Activated CD8-positive, alpha-beta memory T cell treated with anti-CD3 and anti-CD28 coated beads, Interleukin-2, amount 10 ng/mL, durations not matched to agents 7 days and 5 days (primary cell): ENCODE measurements at regions of chr5 and their contacts with region 1.

Region 1: DNA sequence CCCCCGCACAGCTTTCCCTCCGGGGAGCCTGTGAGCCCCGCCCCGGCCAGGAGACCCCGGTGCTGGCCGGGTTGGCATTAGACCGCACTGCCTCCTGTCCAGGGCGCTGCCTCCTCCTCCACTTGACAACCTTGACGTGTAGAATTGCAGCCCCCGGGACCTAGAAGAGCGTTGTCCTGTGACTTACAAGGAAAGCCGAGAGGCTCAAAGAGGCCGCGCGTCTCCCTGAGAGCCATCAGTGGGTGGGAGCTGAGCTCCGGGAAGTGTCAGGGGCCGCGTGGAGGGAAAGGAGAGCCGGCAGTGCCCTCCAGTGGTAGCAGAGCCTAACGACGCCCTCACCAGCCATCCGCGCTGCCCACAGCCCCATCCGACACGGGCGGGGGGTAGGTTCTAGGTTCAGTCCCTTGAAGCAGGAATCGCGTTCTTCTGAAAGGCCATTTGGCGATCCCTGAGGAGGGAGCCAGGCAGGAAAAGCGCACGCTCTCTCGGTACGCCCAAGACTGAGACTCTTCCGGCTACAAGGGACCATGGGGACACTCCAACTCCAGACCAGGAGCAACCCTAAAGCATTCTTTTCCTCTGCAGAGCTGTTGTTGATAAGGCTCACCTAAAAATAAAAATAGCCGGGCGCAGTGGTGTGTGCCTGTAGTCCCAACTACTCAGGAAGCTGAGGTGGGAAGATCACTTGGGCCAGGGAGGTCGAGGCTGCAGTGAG is 40.6 kb upstream of the SAP30L start:
- DNase-seq: peak; percentile 80
- ATAC-seq: peak; percentile 98
- H3K4me3 Mint-ChIP-seq: no peak overlapping the region
- H3K27ac Mint-ChIP-seq: no peak overlapping the region
- H3K4me1 Mint-ChIP-seq: peaks cover 7% of the 10 kb centered on the region
- H3K27me3 Mint-ChIP-seq: no peaks in the 10 kb centered on the region

Region 2: DNA sequence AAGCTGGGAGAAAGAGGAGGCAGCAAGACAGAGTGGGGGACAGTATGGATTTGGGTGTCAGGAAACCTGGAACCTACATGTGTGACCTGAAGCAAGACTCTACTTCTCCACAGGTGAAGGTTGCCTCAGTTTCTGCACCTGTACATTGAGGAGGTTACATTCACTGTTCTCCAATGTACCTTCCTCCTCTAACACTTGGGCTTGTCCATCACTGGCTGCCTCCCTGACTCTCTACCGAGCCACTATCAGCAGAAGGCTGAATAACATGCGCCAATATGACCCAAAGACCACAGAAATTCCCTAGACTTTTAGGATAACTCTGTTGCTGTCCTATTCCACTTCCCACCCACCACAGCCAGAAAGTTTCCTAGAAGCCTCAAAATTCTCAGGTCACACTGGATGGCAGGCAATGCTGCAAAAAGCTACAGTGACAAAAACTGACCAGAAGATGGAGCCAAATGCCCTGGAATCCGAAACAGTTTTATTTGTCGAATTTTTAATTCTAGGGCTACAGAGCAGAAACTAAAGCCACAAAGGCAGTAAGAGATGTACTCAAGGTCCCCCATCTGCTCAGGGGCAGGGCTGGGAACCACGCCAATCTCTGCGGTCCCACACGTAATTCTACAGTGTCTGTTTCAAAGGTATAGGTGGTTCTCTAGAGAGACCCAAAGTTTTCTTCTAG is 431.0 kb before region 1 on chr5:
- CTCF ChIA-PET with region 1: interaction called, 15 read pairs
- DNase-seq: peak; percentile 54
- ATAC-seq: peak; percentile 64
- H3K4me3 Mint-ChIP-seq: no peak overlapping the region
- H3K27ac Mint-ChIP-seq: no peak overlapping the region
- H3K4me1 Mint-ChIP-seq: no peaks in the 10 kb centered on the region
- H3K27me3 Mint-ChIP-seq: peaks cover 14% of the 10 kb centered on the region

Region 3: GRCh38 chr5:154038707-154039457 is 366.4 kb before region 1 on chr5 and contains the starts of genes FAM114A2 and MFAP3:
- CTCF ChIA-PET with region 1: interaction called, 10 read pairs
- DNase-seq: peak; percentile 95
- ATAC-seq: peak; percentile 99
- H3K4me3 Mint-ChIP-seq: peak within 1 kb of the TSS; percentile 93
- H3K27ac Mint-ChIP-seq: peak within 1 kb of the TSS; percentile 93
- H3K4me1 Mint-ChIP-seq: peaks cover 47% of the 10 kb centered on the region
- H3K27me3 Mint-ChIP-seq: no peaks in the 10 kb centered on the region
- total RNA-seq, gene FAM114A2: 22.3 to 27.0 TPM
- total RNA-seq, gene MFAP3: 23.3 to 26.1 TPM

Region 4: GRCh38 chr5:154179846-154180710 is 225.2 kb before region 1 on chr5:
- CTCF ChIA-PET with region 1: interaction called, 11 read pairs
- DNase-seq: peak; percentile 57
- ATAC-seq: peak; percentile 91
- H3K4me3 Mint-ChIP-seq: no peak overlapping the region
- H3K27ac Mint-ChIP-seq: no peak overlapping the region
- H3K4me1 Mint-ChIP-seq: peaks cover 15% of the 10 kb centered on the region
- H3K27me3 Mint-ChIP-seq: peaks cover 8% of the 10 kb centered on the region

Region 5: GRCh38 chr5:154189819-154190594 is 215.2 kb before region 1 on chr5:
- CTCF ChIA-PET with region 1: interaction called, 45 read pairs
- DNase-seq: peak; percentile 86
- ATAC-seq: peak; percentile 84
- H3K4me3 Mint-ChIP-seq: peak overlapping the region; percentile 81
- H3K27ac Mint-ChIP-seq: peak overlapping the region; percentile 68
- H3K4me1 Mint-ChIP-seq: peaks cover 31% of the 10 kb centered on the region
- H3K27me3 Mint-ChIP-seq: peaks cover 3% of the 10 kb centered on the region

Region 6: DNA sequence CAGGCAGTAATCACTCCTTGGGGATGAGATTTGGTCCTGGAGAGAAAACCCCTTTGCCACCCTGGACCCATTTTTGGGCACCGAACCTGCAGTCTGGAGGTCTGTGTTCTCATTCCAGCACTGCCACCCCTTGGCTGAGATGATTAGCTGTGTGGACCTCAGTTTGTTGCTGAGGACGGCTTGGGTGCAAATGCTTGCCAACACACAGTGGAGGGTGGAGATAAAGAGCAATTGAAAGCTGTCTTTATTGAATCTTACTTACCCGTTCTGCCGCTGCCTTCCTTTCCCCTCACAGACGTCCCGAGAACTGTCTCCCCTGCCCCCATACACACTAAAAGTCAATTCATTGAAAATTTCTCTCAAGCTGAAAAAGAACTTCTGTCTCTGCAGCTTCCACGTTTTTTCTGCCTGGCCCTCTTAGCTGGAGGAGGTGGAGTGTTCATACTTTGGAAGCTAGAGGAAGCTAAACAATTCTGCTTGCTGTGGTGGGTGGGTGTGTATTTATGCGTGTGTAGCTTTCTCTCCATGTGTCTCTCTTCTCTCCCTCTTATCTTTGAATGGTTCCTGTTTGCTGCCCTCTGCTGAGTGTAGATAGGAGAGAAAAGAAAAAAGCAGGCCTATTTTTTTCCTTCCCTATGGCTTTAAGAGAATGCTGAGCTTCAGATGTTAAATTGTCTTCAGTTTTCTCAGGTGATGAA is 208.1 kb before region 1 on chr5:
- CTCF ChIA-PET with region 1: interaction called, 45 read pairs
- DNase-seq: no peak
- ATAC-seq: peak; percentile 13
- H3K4me3 Mint-ChIP-seq: no peak overlapping the region
- H3K27ac Mint-ChIP-seq: peak overlapping the region; percentile 91
- H3K4me1 Mint-ChIP-seq: peaks cover 68% of the 10 kb centered on the region
- H3K27me3 Mint-ChIP-seq: no peaks in the 10 kb centered on the region